CD4-positive, alpha-beta memory T cell (primary cell): ENCODE measurements at regions of chr1 and their contacts with region 1.

Region 1: DNA sequence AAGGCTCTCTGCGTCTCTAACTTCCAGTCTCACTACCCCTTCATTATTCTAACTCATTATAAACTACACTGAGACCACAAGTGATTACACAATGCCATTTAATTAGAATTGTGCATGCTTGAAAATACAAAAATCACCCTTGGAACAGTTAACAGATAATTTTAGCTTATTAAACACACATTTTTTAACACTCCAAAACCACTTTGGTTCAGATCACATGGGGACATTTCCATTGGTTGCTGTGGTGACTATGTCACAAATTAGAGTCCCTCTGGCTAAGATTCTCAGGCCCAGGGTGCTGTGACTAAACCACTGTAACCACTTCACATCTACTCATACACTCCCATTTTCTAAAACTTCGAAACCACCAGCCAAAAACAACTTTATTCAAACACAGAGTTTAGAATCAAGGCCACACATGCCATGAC is 43.0 kb downstream of the JAK1 start:
- DNase-seq: peak in 2 of 5 donors; percentile 53 to 67
- H3K4me3 ChIP-seq: no peak overlapping the region
- H3K4me3 Mint-ChIP-seq: peak overlapping the region in 7 of 8 donors; percentile 5 to 71 (median 60)
- H3K27ac ChIP-seq: peak overlapping the region; percentile 33
- H3K27ac Mint-ChIP-seq: peak overlapping the region; percentile 2 to 89 (median 78)
- H3K4me1 ChIP-seq: peaks cover 85% of the 10 kb centered on the region
- H3K4me1 Mint-ChIP-seq: peaks cover 76 to 98% (median 88%) of the 10 kb centered on the region in 4 donors
- H3K27me3 ChIP-seq: no peaks in the 10 kb centered on the region
- H3K27me3 Mint-ChIP-seq: no peaks in the 10 kb centered on the region

Region 2: GRCh38 chr1:64798872-64799271 is 124.4 kb before region 1 on chr1:
- CTCF ChIA-PET with region 1: no interaction called
- POLR2A ChIA-PET with region 1: no interaction called
- intact Hi-C with region 1: no loop called
- DNase-seq: no peak
- H3K4me3 ChIP-seq: no peak overlapping the region
- H3K4me3 Mint-ChIP-seq: no peak overlapping the region
- H3K27ac ChIP-seq: no peak overlapping the region
- H3K27ac Mint-ChIP-seq: no peak overlapping the region
- H3K4me1 ChIP-seq: no peaks in the 10 kb centered on the region
- H3K4me1 Mint-ChIP-seq: no peaks in the 10 kb centered on the region
- H3K27me3 ChIP-seq: no peaks in the 10 kb centered on the region
- H3K27me3 Mint-ChIP-seq: no peaks in the 10 kb centered on the region

Region 3: DNA sequence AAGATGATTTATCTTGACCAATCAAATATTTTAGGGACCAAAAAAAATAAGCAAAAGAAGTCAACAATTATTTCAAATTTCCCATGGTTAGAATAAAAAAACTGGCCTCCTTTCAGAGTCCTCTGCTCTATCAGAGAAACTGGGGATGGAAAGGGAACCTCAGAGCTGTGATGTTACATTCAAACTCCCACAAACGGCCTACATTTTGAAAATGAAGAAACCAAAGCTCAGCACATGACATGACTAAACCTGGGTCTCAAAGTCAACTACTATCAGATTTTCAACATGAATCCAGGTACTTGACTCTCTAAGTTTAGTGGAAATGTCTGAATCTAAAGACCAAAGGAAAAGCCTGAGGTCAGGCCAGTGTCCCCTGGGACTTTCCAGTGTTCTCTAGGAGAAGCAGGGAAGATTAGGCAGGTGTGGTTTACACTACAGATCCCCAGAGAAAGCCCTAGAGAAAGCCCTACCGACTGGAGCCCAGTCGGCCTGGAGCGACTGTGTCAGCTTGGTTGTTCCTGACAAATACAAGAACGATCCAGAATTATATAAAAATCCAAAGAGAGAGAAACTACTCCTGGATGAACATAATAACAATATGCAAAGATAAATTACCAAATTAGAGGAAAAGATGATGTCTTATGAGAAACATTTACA is 18.3 kb after region 1 on chr1:
- CTCF ChIA-PET with region 1: no interaction called
- POLR2A ChIA-PET with region 1: no interaction called
- intact Hi-C with region 1: loop called (anchors 2 kb)
- DNase-seq: no peak
- H3K4me3 ChIP-seq: no peak overlapping the region
- H3K4me3 Mint-ChIP-seq: peak overlapping the region in 4 of 8 donors; percentile 27 to 47 (median 36)
- H3K27ac ChIP-seq: no peak overlapping the region
- H3K27ac Mint-ChIP-seq: peak overlapping the region in 4 of 7 donors; percentile 33 to 63 (median 48)
- H3K4me1 ChIP-seq: peaks cover 73% of the 10 kb centered on the region
- H3K4me1 Mint-ChIP-seq: peaks cover 49 to 85% (median 71%) of the 10 kb centered on the region in 4 donors
- H3K27me3 ChIP-seq: no peaks in the 10 kb centered on the region
- H3K27me3 Mint-ChIP-seq: no peaks in the 10 kb centered on the region

Region 4: DNA sequence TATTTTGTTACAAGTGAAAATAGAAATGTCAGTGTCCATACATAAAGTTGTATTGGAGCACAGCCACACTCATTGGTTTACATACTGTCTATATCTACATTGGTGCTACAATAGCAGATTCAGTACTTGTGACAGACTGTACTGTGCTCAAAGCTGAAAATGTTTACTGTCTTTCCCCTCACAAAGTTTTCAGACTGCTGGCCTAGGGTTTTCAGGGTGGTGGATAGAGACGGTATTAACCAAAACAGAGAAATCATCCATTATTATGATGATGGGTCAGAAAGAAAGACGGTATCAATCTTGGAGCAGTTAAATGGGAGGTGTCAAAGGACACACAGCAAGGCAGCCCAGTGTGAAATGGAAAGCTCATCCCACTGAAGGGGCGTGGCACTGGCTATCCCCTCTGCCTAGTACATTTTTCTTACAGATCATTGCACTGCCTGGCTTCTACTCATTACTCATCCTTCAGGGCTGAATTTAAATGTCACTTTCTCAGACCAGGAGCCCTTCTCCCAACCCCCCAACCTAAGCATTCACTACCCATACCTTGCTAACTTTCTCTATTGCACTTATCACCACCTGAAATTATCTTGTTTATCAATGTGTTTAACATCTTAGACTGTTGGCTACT is 32.8 kb after region 1 on chr1:
- CTCF ChIA-PET with region 1: no interaction called
- POLR2A ChIA-PET with region 1: no interaction called
- intact Hi-C with region 1: no loop called
- DNase-seq: no peak
- H3K4me3 ChIP-seq: no peak overlapping the region
- H3K4me3 Mint-ChIP-seq: no peak overlapping the region
- H3K27ac ChIP-seq: peak overlapping the region; percentile 17
- H3K27ac Mint-ChIP-seq: no peak overlapping the region
- H3K4me1 ChIP-seq: peaks cover 96% of the 10 kb centered on the region
- H3K4me1 Mint-ChIP-seq: peaks cover 21 to 46% (median 34%) of the 10 kb centered on the region in 4 donors
- H3K27me3 ChIP-seq: no peaks in the 10 kb centered on the region
- H3K27me3 Mint-ChIP-seq: no peaks in the 10 kb centered on the region